ENCODE measurements at regions of chr2 and their contacts with region 1.

Region 1: GRCh38 chr2:38778687-38779082 is 675 bp downstream of the GEMIN6 start:
- DNase-seq: no peak
- H3K4me3 Mint-ChIP-seq: peak overlapping the region; percentile 97
- H3K27ac Mint-ChIP-seq: peak overlapping the region; percentile 96
- H3K4me1 Mint-ChIP-seq: peaks cover 10% of the 10 kb centered on the region
- H3K27me3 Mint-ChIP-seq: peaks cover 16% of the 10 kb centered on the region

Region 2: DNA sequence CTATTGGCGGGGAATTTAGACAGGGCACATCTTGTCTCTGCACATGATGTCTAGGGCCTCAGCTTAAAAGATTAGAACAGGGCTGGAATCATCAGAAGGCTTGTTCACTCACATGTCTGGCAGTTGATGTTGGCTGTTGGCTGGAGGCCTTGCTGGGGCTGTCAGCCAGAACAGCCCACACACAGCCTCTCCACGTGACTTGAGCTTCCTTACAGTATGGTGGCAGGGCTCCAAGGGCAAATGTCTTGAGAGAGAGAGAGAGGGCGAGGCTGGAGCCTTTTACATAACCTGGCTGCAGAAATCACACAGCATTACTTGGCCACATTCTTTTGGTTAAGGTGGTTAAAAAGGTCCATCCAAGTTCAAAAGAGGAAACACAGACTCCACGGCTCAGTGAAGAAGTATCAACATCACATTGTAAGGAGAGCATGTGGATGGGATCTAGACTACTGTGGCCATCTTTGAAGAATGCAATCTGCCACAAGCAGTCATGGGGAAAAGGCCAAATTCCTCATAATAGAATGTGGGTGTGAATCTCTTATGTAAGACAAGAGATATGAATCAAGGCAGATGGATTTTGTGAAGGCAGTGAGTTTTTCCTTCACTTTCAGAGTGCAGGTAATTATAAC is 58.0 kb before region 1 on chr2:
- intact Hi-C with region 1: no loop called
- DNase-seq: no peak
- H3K4me3 Mint-ChIP-seq: no peak overlapping the region
- H3K27ac Mint-ChIP-seq: peak overlapping the region; percentile 38
- H3K4me1 Mint-ChIP-seq: peaks cover 50% of the 10 kb centered on the region
- H3K27me3 Mint-ChIP-seq: no peaks in the 10 kb centered on the region

Region 3: GRCh38 chr2:38750891-38751595 is 27.6 kb before region 1 on chr2 and contains the start of gene SRSF7:
- intact Hi-C with region 1: loop called (anchors 1 kb)
- DNase-seq: peak; percentile 97
- H3K4me3 Mint-ChIP-seq: peak within 1 kb of the TSS; percentile 98
- H3K27ac Mint-ChIP-seq: peak within 1 kb of the TSS; percentile 100
- H3K4me1 Mint-ChIP-seq: peaks cover 53% of the 10 kb centered on the region
- H3K27me3 Mint-ChIP-seq: no peaks in the 10 kb centered on the region
- total RNA-seq, gene SRSF7: 401 and 406 TPM in 2 replicates

Region 4: DNA sequence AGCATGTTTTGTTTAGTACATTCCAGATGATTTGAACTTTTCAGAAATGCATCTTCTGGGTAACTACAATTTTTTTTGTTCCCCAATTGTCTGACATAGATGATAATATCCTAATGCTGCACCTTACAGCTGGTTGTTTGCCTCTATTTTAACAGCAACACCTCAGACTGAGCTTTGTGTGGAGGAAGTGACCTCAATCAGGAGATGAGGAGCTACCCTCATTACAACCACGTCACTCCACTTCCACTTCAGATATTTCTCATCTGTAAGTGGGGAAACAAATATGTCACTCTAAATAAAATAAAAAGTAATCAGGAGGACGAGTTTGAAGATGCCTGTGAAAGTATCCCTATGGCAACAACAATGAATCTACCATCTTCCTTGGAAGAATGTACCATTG is 15.5 kb before region 1 on chr2:
- intact Hi-C with region 1: loop called (anchors 2 kb)
- DNase-seq: no peak
- H3K4me3 Mint-ChIP-seq: no peak overlapping the region
- H3K27ac Mint-ChIP-seq: no peak overlapping the region
- H3K4me1 Mint-ChIP-seq: peaks cover 8% of the 10 kb centered on the region
- H3K27me3 Mint-ChIP-seq: no peaks in the 10 kb centered on the region